ENCODE measurements at regions of chr14 and their contacts with region 1.

Region 1: DNA sequence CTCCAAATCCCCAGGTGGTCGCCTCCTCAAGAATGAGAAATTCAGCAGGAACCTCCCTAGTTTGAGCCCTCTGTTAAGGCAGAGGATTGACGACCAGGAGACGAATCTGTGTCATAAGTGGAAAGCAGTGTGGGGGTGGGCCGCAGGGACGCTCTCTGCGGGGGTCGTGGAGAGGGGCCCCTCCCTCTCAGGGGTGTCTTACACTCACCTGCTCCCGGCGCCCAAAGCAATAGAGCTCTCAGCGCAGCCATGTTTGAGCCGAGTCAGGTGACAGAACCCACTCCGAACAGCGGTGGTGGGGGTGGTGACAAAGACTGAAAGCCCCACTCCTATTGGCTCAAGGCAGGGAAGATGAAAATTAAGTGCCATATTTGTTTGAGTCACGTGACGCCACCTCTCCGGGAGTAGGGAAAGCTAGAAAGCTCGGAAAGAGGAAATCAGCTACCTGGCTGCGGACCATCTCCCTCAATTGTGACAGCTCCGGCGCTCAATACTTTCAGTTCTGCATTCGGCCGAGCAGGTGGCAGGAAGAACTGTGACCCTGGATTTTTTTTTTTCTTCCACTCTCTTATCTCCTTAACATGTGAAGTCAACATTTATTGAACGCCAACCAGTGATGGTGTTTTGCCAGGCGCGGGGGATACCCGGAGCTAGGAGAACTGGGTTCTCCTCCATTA is at the start of gene ZFYVE26:
- DNase-seq: peak; percentile 87 to 95 (median 88)
- H3K4me3 ChIP-seq: peak within 1 kb of the TSS; percentile 54 to 86
- H3K4me3 Mint-ChIP-seq: peak within 1 kb of the TSS; percentile 89 to 99 (median 96)
- H3K27ac ChIP-seq: peak within 1 kb of the TSS; percentile 47
- H3K27ac Mint-ChIP-seq: peak within 1 kb of the TSS; percentile 86 to 98 (median 96)
- H3K4me1 ChIP-seq: peaks cover 38% of the 10 kb centered on the region
- H3K4me1 Mint-ChIP-seq: peaks cover 39 to 61% (median 46%) of the 10 kb centered on the region in 4 donors
- H3K27me3 ChIP-seq: no peaks in the 10 kb centered on the region
- H3K27me3 Mint-ChIP-seq: no peaks in the 10 kb centered on the region
- total RNA-seq, gene ZFYVE26: 35.2 to 38.1 TPM

Region 2: GRCh38 chr14:66600416-66600815 is 1216.0 kb before region 1 on chr14:
- CTCF ChIA-PET with region 1: no interaction called
- POLR2A ChIA-PET with region 1: no interaction called
- intact Hi-C with region 1: no loop called
- DNase-seq: no peak
- H3K4me3 ChIP-seq: no peak overlapping the region
- H3K4me3 Mint-ChIP-seq: no peak overlapping the region
- H3K27ac ChIP-seq: no peak overlapping the region
- H3K27ac Mint-ChIP-seq: no peak overlapping the region
- H3K4me1 ChIP-seq: no peaks in the 10 kb centered on the region
- H3K4me1 Mint-ChIP-seq: peaks cover 0 to 3% (median under 1%) of the 10 kb centered on the region in 4 donors
- H3K27me3 ChIP-seq: no peaks in the 10 kb centered on the region
- H3K27me3 Mint-ChIP-seq: no peaks in the 10 kb centered on the region

Region 3: GRCh38 chr14:67674481-67675169 is 141.8 kb before region 1 on chr14 and contains the start of gene VTI1B:
- CTCF ChIA-PET with region 1: no interaction called
- POLR2A ChIA-PET with region 1: interaction called, 3 read pairs
- intact Hi-C with region 1: loop called (anchors 1 kb)
- DNase-seq: peak; percentile 78 to 85 (median 81)
- H3K4me3 ChIP-seq: peak within 1 kb of the TSS; percentile 66 to 96
- H3K4me3 Mint-ChIP-seq: peak within 1 kb of the TSS; percentile 86 to 94 (median 91)
- H3K27ac ChIP-seq: peak within 1 kb of the TSS; percentile 87
- H3K27ac Mint-ChIP-seq: peak within 1 kb of the TSS; percentile 72 to 95 (median 92)
- H3K4me1 ChIP-seq: peaks cover 48% of the 10 kb centered on the region
- H3K4me1 Mint-ChIP-seq: peaks cover 23 to 54% (median 39%) of the 10 kb centered on the region in 4 donors
- H3K27me3 ChIP-seq: no peaks in the 10 kb centered on the region
- H3K27me3 Mint-ChIP-seq: no peaks in the 10 kb centered on the region
- total RNA-seq, gene VTI1B: 71.1 to 72.6 TPM